ENCODE measurements at regions of chr10 and their contacts with region 1.

Region 1: GRCh38 chr10:67849331-67850011 is 11.5 kb upstream of the DNAJC12 start:
- DNase-seq: peak; percentile 92 to 96 (median 96)
- H3K4me3 ChIP-seq: peak overlapping the region; percentile 76 to 99 (median 90)
- H3K27ac ChIP-seq: peak overlapping the region; percentile 92 to 94
- H3K4me1 ChIP-seq: peaks cover 0 to 5% (median 4%) of the 10 kb centered on the region in 4 experiments
- H3K27me3 ChIP-seq: no peaks in the 10 kb centered on the region

Region 2: DNA sequence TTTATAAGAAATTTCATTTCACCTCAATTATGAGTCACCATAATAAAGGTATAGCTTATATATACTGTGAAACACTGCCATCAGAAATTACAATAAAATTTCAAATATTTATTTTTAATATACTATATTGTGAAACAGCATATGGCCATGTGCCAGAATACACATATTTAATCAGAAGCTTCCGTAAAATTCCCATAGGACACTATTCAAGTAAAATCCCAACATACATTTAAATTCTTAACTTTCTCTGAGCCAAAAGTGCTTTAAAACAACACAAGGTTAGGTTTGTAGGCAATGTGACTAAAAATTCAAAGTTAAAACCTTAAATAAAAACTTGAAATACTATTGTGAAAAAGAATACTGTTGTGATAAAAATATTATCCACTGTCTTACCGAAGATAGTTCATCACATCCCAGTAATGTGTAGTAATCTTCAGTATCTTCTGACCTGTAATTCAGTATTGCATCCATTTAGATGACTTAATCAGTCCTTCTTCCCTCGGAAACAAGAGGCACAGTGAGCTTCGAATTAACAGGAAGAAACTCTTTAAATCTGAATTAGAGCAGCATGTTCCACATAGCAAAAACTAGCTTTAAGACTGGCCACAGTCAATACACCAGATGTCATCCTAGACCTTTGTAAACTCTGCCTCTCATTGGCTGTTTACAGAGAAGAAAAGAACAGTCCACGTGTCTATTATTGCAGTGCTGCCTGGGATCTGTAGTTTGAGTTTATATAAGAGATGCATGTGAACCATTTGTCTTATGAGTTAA is 11.7 kb before region 1 on chr10 and contains the start of gene DNAJC12:
- CTCF ChIA-PET with region 1: no interaction called
- POLR2A ChIA-PET with region 1: no interaction called
- DNase-seq: peak; percentile 30 to 80 (median 73)
- H3K4me3 ChIP-seq: peak within 1 kb of the TSS in 6 of 7 experiments; percentile 16 to 69 (median 49)
- H3K27ac ChIP-seq: no peak within 1 kb of the TSS
- H3K4me1 ChIP-seq: peaks cover 4 to 13% (median 5%) of the 10 kb centered on the region in 4 experiments
- H3K27me3 ChIP-seq: no peaks in the 10 kb centered on the region

Region 3: DNA sequence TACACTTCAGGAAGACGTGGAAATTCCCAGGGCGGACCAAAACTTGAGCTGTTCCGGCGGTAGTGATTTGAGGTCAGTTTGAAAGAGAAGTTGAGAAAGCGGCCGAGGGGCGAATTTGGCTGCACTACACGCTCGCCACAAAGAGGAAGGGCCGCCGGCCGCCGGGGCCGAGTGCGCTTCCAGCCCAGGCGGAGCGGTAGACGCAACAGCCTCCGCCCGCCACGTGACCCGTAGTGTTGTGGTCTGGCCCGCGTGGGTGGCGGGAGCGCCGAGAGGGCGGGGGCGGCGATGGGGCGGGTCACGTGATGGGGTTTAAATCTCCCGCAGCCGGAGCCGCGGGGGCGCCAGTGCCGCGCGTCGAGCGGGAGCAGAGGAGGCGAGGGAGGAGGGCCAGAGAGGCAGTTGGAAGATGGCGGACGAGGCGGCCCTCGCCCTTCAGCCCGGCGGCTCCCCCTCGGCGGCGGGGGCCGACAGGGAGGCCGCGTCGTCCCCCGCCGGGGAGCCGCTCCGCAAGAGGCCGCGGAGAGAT is 34.9 kb after region 1 on chr10 and contains the start of gene SIRT1:
- CTCF ChIA-PET with region 1: interaction called, 16 read pairs
- POLR2A ChIA-PET with region 1: no interaction called
- DNase-seq: peak; percentile 94 to 97 (median 97)
- H3K4me3 ChIP-seq: peak within 1 kb of the TSS; percentile 76 to 93 (median 84)
- H3K27ac ChIP-seq: peak within 1 kb of the TSS; percentile 66 to 76
- H3K4me1 ChIP-seq: peaks cover 2 to 13% (median 10%) of the 10 kb centered on the region in 4 experiments
- H3K27me3 ChIP-seq: no peaks in the 10 kb centered on the region

Region 4: DNA sequence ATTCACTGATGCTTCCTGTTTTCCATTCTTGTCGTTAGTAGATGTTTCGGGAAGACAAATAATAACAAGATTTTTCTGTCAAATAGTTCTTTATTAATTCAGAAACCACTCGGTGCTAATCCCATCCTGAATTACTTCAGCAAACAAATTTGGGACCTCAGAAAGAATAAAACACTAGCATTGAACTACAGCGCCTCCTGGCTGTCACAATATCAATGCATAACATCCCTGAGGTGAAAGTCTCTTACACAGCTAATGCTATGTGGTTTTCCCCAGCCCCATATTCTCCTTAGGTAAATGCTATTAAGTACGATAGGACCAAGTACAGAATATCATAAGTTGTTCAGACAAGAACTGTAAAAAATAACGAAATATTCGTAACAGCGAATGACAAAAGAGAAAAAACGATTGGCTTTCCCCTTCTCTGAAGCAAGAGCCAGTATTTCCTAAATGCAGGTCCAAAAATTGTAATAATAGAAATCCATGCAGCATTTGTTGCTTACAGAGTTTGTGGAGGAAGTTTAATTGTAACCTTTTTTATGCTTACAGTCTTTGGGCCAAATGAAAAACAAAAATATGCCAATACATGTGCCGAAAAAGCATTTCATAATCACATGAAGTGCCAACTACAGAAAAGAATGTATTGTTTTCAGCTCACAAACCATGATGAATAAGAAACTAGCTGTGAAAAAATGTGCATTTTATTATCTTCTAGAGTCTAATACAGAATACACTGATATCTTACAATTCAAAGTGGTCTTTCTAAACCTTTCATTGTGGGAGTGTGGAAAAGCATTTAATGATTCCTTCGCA is 307.1 kb after region 1 on chr10:
- CTCF ChIA-PET with region 1: interaction called, 37 read pairs
- POLR2A ChIA-PET with region 1: no interaction called
- DNase-seq: peak; percentile 42 to 82 (median 72)
- H3K4me3 ChIP-seq: no peak overlapping the region
- H3K27ac ChIP-seq: no peak overlapping the region
- H3K4me1 ChIP-seq: no peaks in the 10 kb centered on the region
- H3K27me3 ChIP-seq: peaks cover 0 to 2% (median 0%) of the 10 kb centered on the region in 5 experiments

Measured in common myeloid progenitor, CD34-positive (primary cell).